OCI-LY7 (cell line): ENCODE measurements at regions of chr3 and their contacts with region 1.

Region 1: DNA sequence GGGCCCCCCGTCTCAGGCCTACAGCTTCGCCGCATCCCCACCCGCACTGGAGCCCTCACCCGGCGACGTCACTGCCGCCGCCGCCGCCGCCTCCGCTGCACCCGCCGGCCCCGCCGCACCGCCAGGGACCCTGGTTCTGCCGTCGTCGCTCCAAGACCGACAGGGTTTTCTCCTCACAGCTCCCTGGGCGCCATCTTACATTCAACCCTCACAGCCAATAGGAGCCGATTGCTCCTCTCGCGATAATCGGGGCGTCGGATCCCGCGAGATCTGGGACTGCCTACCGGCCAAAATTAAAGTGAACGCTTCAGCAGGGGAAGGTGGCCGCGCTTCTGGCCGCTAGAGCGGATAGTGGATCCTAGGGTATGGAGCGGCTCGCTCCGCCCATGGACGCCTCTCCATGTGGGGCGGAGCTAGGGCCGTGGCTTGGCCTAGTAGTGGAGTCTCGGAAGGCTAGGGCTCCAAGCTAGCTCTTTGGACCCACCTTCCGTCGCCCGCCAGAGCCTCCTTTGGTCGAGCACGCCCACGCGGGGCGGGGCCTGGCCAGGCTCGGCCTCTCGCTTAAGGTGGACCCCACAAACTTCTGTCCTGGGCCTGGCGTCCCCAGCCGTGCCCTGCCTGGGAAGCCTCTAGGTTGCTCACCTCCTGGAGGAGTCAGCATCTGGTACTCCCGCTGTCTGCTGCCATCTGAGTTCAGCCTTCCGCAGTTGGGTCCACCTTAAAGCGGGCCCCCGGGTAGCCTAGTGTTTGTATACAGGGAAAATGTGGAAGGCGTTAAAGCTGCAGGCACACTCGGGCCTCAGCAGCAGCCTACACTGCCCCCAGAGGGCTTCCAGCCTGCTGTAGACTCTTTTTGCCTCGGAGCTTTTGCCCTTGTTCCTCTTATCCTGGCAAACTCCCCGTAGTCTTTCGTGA is at the start of gene QRICH1:
- DNase-seq: peak; percentile 99
- H3K4me3 ChIP-seq: peak within 1 kb of the TSS; percentile 94
- H3K27ac ChIP-seq: peak within 1 kb of the TSS; percentile 87
- H3K4me1 ChIP-seq: peaks cover 23% of the 10 kb centered on the region
- CTCF ChIP-seq: peak; percentile 79
- total RNA-seq, gene QRICH1: 93.0 and 111 TPM in 2 replicates

Region 2: DNA sequence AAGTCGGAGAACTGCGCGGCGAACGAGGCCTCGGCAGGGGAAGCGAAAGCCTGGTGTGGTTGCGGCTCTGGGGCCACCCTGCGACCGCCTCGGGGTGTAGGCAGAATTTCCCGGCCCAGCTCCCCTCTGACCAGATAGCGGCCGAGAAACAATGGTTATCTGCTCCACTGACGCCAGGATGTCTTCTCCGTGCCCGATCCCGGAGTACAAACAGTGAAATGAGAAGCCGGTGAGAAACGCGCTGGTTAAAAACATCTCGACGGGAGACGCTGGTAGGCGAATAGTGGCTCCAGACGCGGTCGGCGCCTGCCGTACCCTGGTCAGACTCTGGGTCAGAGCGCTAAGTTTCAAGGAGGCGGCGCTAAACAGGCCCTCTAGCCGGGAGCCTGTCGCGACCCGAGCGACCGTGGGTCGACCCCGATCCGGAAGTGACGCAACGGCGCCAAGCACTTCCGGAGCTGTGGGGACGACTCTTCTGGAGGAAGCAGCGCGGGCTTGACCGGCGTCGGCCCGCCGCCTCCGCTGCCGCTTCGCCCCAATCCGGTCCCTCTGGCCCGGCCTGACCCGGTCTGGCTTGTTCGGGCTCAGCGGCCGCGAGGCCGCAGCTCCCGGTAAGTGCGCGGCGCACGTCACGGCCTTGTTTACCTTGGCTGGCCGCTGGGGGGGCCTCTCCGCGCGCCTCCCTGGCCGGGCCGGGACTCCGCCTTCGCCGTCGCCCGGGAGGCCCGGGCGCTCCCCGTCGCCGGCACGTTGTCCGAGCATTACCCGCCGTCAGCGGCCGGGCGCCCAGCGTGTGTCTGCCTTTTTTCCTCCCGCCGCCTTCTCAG is 175.5 kb before region 1 on chr3 and contains the start of gene ARIH2:
- CTCF ChIA-PET with region 1: interaction called, 5 read pairs
- POLR2A ChIA-PET with region 1: no interaction called
- intact Hi-C with region 1: loop called (anchors 5 kb)
- DNase-seq: peak; percentile 95
- H3K4me3 ChIP-seq: peak within 1 kb of the TSS; percentile 78
- H3K27ac ChIP-seq: peak within 1 kb of the TSS; percentile 93
- H3K4me1 ChIP-seq: peaks cover 23% of the 10 kb centered on the region
- CTCF ChIP-seq: peak; percentile 27; the same call in 1 of the 2 replicates
- total RNA-seq, gene ARIH2: 121 and 124 TPM in 2 replicates

Region 3: GRCh38 chr3:49021813-49022687 is 72.1 kb before region 1 on chr3 and contains the start of gene NDUFAF3:
- CTCF ChIA-PET with region 1: no interaction called
- POLR2A ChIA-PET with region 1: interaction called, 10 read pairs
- intact Hi-C with region 1: loop called (anchors 1 kb)
- DNase-seq: peak; percentile 99
- H3K4me3 ChIP-seq: peak within 1 kb of the TSS; percentile 80
- H3K27ac ChIP-seq: peak within 1 kb of the TSS; percentile 93
- H3K4me1 ChIP-seq: peaks cover 65% of the 10 kb centered on the region
- CTCF ChIP-seq: peak; percentile 84
- total RNA-seq, gene NDUFAF3: 255 and 309 TPM in 2 replicates

Region 4: DNA sequence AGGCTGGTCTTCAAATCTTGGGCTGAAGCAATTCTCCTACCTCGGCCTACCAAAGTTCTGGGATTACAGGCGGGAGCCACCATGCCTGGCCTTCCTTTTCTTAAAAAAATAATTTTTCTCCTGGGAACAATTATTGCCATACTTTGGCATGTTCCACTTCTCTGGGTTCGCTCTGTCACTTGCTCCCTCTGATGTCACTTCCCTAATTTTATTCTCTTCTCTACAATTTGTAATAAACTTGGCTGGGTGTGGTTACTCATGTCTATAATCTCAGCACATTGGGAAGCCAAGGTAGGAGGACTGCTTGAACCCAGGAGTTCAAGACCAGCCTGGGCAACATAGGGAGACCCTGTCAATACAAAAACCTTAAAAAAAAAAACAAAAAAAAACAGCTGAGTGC is 58.8 kb before region 1 on chr3:
- CTCF ChIA-PET with region 1: no interaction called
- POLR2A ChIA-PET with region 1: no interaction called
- intact Hi-C with region 1: no loop called
- DNase-seq: no peak
- H3K4me3 ChIP-seq: no peak overlapping the region
- H3K27ac ChIP-seq: no peak overlapping the region
- H3K4me1 ChIP-seq: no peaks in the 10 kb centered on the region
- CTCF ChIP-seq: no peak

Region 5: GRCh38 chr3:49104483-49105291 is 10.6 kb after region 1 on chr3 and contains the start of gene QARS1:
- CTCF ChIA-PET with region 1: interaction called, 3 read pairs
- POLR2A ChIA-PET with region 1: interaction called, 14 read pairs
- intact Hi-C with region 1: loop called (anchors 1 kb)
- DNase-seq: peak; percentile 94
- H3K4me3 ChIP-seq: peak within 1 kb of the TSS; percentile 79
- H3K27ac ChIP-seq: peak within 1 kb of the TSS; percentile 76
- H3K4me1 ChIP-seq: peaks cover 24% of the 10 kb centered on the region
- CTCF ChIP-seq: no peak
- total RNA-seq, gene QARS1: 290 and 310 TPM in 2 replicates

Region 6: GRCh38 chr3:49133226-49133951 is 39.3 kb after region 1 on chr3:
- CTCF ChIA-PET with region 1: no interaction called
- POLR2A ChIA-PET with region 1: no interaction called
- intact Hi-C with region 1: no loop called
- DNase-seq: no peak
- H3K4me3 ChIP-seq: no peak overlapping the region
- H3K27ac ChIP-seq: no peak overlapping the region
- H3K4me1 ChIP-seq: peaks cover 9% of the 10 kb centered on the region
- CTCF ChIP-seq: no peak

Region 7: DNA sequence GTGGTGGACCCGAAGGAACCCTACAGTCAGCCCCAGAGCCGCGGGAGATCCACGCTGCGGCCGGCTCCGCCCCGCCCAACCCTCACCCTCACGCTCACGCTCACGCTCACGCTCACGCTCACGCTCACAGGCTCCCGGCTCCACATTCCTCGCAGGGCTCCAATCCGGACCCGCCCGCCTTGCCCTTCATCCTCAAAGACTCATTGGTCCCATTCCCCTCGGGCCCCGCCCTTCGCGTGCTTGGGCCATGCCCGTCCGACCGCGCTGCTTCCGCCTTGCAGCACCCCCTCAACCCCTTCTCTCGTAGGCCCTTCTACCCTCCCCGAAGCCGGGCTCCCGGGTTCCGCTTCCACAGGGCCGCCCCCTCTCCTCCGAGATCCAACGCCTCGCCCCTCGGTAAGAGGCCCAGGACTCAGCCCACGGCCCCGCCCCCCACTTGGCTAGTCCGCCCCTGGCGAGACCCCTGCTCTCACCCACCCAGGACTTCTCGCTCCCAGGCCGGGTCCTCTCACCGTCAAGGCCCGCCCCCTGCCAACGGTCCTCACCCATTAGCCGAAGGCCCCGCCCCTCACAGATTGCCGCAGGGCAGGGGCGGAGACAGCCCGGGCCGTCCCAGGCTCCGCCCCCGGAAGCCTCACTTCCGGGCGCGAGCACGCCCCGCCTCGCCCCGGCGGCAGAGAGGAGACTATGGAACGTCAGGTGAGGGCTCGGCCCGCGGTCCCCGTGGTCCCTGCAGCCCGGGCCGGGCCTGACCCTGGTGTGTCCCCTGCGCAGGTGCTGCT is 579.8 kb after region 1 on chr3 and contains the start of gene APEH:
- CTCF ChIA-PET with region 1: no interaction called
- POLR2A ChIA-PET with region 1: no interaction called
- intact Hi-C with region 1: loop called (anchors 5 kb)
- DNase-seq: peak; percentile 98
- H3K4me3 ChIP-seq: peak within 1 kb of the TSS; percentile 89
- H3K27ac ChIP-seq: peak within 1 kb of the TSS; percentile 84
- H3K4me1 ChIP-seq: peaks cover 17% of the 10 kb centered on the region
- CTCF ChIP-seq: no peak
- total RNA-seq, gene APEH: 94.8 and 112 TPM in 2 replicates